ENCODE measurements at regions of chr1 and their contacts with region 1.

Region 1: DNA sequence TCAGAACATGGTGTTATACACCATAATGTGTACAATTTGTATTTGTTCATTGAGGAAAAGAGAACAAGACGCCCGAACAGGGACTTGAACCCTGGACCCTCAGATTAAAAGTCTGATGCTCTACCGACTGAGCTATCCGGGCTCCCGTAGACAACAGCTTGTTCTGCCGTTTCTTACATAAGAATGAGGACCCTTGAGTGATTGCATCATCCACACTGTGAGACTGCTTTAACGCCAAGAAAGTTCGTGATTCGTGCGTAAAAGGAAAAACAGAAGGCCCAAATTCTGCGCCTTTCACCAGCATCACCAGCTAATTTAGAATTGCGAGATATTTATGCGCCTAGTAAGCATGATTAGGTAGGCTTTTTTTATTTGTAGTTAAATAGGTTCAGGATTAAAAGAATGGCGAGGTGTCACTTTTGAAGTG is 9.2 kb upstream of the MDM4 start:
- DNase-seq: peak; percentile 85
- H3K4me3 Mint-ChIP-seq: peak overlapping the region; percentile 87
- H3K27ac Mint-ChIP-seq: peak overlapping the region; percentile 97
- H3K4me1 Mint-ChIP-seq: peaks cover 33% of the 10 kb centered on the region
- H3K27me3 Mint-ChIP-seq: peaks cover 2% of the 10 kb centered on the region

Region 2: GRCh38 chr1:204162231-204163074 is 344.5 kb before region 1 on chr1:
- intact Hi-C with region 1: loop called (anchors 5 kb)
- DNase-seq: peak; percentile 60
- H3K4me3 Mint-ChIP-seq: no peak overlapping the region
- H3K27ac Mint-ChIP-seq: no peak overlapping the region
- H3K4me1 Mint-ChIP-seq: peaks cover 2% of the 10 kb centered on the region
- H3K27me3 Mint-ChIP-seq: peaks cover 2% of the 10 kb centered on the region

Region 3: DNA sequence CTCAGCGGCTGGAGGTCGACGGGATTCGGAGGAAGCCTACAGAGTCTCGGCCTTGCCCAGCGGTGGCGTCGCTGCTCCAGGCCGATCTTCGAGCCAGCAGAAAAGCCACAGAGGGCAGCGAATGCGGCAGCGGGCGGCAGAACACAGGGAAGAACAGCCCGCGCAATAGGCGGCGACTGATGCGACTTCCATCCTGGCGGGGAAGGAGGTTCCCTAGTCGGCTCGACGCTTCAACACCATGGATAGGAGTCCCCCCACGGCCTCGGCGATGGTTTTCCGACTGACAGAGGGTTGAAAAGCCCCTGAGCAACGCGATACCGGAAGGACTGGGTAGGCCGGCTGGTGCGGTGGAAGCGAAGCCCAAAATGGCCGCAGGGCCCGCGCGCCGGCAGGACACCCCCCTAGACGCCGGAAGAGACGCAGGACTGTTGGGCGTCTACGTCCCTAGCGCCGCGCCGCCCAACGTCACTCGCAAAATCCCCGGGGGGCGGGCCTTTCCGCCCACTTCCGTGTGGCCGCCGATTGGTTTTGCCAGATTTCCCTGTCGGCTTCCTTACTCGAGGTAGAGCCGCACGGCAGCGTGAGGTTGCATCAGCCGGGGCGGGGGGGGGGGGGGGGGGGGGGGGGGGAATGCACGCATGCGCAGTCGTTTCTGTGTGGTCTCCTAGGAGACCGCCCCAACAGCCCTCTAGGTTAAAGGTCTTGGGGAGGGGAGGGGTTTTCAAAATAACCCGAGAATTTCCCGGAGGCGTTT is 95.3 kb before region 1 on chr1 and contains the start of gene PPP1R15B:
- intact Hi-C with region 1: loop called (anchors 1 kb)
- DNase-seq: peak; percentile 98
- H3K4me3 Mint-ChIP-seq: peak within 1 kb of the TSS; percentile 98
- H3K27ac Mint-ChIP-seq: peak within 1 kb of the TSS; percentile 98
- H3K4me1 Mint-ChIP-seq: peaks cover 14% of the 10 kb centered on the region
- H3K27me3 Mint-ChIP-seq: no peaks in the 10 kb centered on the region
- total RNA-seq, gene PPP1R15B: 63.4 and 64.3 TPM in 2 replicates

Region 4: GRCh38 chr1:204431310-204432165 is 75.4 kb before region 1 on chr1:
- intact Hi-C with region 1: loop called (anchors 1 kb)
- DNase-seq: peak; percentile 63
- H3K4me3 Mint-ChIP-seq: no peak overlapping the region
- H3K27ac Mint-ChIP-seq: no peak overlapping the region
- H3K4me1 Mint-ChIP-seq: no peaks in the 10 kb centered on the region
- H3K27me3 Mint-ChIP-seq: no peaks in the 10 kb centered on the region

Region 5: DNA sequence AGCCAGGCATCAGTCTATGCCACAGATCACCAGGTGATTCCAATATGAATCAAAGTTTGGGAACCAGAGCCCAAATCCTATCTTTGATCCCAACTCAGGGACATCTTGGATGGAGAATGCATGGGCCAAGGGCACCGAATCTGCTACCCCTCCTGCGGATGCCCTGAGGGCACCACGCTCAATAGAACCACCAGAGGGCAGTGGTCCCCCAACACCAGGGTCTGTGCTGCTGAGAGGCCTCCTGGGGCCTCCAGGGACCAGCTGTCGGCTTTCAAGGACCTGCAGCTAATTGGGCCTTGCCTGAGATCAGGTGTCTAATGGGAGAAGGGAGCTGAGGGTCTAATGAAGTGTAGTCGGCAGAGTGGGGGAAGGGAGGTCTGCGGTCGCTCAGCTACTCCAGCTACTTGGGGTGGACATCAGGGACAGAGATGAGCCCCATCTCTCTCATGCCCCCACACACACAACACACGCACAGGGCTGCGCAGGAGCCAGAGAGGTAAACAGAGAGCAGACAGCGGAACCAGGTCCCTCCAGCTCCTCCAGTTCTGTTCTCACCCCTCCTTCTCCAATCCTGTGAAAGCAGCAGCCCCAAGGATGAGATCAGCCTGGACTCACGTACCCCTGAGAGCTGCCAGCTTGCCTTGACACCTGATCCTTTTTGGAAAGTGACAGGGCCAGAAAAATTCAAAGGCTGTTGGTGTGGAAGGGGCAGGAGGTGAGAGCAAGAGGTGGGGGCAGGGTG is 60.4 kb before region 1 on chr1:
- intact Hi-C with region 1: loop called (anchors 1 kb)
- DNase-seq: peak; percentile 63
- H3K4me3 Mint-ChIP-seq: no peak overlapping the region
- H3K27ac Mint-ChIP-seq: peak overlapping the region; percentile 55
- H3K4me1 Mint-ChIP-seq: peaks cover 14% of the 10 kb centered on the region
- H3K27me3 Mint-ChIP-seq: no peaks in the 10 kb centered on the region

Region 6: DNA sequence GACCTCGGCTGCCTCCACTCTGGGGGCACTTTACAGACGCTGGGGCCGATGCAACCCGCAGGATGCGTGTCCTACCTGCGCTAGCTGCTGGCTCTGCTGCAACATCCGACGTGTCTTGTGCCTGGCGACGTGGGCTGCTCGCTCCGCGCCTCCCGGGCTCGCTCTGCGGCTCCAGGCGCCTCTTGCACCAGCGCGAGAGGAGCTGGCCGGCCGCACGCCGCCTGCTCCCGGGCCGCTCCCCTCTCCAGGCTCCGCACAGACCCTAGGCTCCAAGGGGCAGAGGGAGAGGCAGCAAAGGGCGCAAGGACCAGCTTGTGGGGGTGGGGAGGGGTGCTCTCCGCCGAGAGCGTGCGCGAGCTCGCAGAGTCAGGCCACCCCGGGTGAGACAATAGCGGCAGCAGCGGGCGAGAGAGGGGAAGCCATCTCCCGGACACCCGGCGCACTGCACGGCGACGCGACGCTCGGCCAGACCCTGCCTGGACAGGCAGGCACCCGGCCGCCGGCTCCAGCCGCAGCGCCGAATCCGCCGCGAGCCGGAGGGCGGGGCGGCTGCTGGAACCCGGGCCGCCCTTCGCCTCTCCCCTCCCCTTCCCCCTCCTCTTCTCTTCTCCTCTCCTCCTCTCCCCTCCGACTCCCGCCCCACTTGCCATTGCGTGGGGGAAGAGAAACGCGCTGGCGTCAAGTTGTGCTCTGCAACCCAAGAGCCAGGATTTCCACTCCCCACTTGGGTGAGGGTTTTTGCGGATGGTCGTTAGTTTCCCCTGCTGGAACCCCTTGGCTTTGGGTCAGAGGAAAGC is 12.5 kb before region 1 on chr1 and contains the start of gene PIK3C2B:
- intact Hi-C with region 1: loop called (anchors 1 kb)
- DNase-seq: peak; percentile 62
- H3K4me3 Mint-ChIP-seq: peak within 1 kb of the TSS; percentile 95
- H3K27ac Mint-ChIP-seq: peak within 1 kb of the TSS; percentile 93
- H3K4me1 Mint-ChIP-seq: peaks cover 39% of the 10 kb centered on the region
- H3K27me3 Mint-ChIP-seq: peaks cover 4% of the 10 kb centered on the region
- total RNA-seq, gene PIK3C2B: 16.9 and 18.5 TPM in 2 replicates

Region 7: GRCh38 chr1:204558467-204558866 is 51.5 kb after region 1 on chr1:
- intact Hi-C with region 1: no loop called
- DNase-seq: no peak
- H3K4me3 Mint-ChIP-seq: no peak overlapping the region
- H3K27ac Mint-ChIP-seq: no peak overlapping the region
- H3K4me1 Mint-ChIP-seq: peaks cover 37% of the 10 kb centered on the region
- H3K27me3 Mint-ChIP-seq: no peaks in the 10 kb centered on the region

Measured in activated T-helper 2 cell treated with anti-CD3 and anti-CD28 coated beads, Interferon-gamma antibody, Interleukin-2, Interleukin-4, amounts not matched to agents 10 μg/mL and 5 μg/mL and 100 μg/mL, durations not matched to agents 14 hours and 24 hours and 36 hours (primary cell).